Natural killer cell (primary cell): ENCODE measurements at regions of chr15 and their contacts with region 1.

Region 1: DNA sequence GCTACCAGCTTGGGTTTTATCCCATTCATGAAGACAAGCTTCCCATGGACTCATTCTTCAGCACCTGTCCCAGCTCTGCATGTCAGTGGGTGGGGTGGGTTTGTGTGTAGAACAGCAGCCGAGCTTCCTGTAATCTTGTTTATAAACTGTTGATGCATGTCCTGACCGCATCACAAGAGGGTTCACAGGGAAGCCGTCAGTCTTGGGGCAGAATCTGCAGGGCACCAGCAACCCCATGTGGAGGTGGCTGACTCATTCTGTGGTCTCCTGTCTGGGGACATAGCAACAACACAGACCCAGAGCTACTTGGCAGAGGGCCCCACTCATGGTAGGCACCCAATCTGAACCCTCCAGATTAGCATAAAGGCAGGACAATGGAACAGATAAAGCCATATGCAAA is 35.6 kb downstream of the DAPK2 start:
- DNase-seq: peak; percentile 76 to 95
- ATAC-seq: peak; percentile 86 to 96 (median 95)
- H3K4me3 ChIP-seq: no peak overlapping the region
- H3K4me3 Mint-ChIP-seq: peak overlapping the region; percentile 87
- H3K27ac ChIP-seq: peak overlapping the region; percentile 86
- H3K27ac Mint-ChIP-seq: peak overlapping the region; percentile 96 to 98
- H3K4me1 ChIP-seq: peaks cover 29% of the 10 kb centered on the region
- H3K4me1 Mint-ChIP-seq: peaks cover 39 to 40% of the 10 kb centered on the region in 2 donors
- H3K27me3 ChIP-seq: no peaks in the 10 kb centered on the region
- H3K27me3 Mint-ChIP-seq: no peaks in the 10 kb centered on the region
- CTCF ChIP-seq: no peak

Region 2: DNA sequence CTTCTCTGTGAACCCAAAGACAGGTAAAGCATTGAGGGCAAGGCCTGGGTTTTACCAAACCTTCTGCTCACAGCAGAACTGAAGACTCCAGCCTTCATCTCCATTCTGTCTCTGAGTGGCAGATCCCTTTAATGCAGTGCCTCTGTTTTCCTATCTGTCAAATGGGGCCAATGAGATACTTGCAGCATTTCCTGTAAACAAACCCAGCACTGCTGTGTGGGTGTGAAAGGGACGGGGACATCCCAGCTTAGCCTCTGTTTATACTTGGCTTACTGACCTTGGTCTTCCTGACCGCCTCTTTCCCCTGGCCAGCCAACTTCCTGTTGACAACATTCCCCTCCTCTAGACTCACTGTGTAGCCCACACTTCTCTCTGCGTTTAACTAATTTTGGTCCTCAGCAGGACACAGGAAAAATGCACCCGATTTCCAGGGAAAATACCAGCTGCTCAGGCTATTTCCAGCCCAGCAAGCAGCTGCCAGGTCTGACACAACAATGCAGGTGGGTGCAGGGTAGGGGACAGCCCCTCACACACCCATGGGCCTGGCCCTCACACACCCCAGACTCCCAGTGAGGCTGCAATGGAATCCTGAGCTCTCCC is 71.1 kb before region 1 on chr15:
- intact Hi-C with region 1: loop called (anchors 2 kb)
- DNase-seq: peak in 1 of 2 donors; percentile 55
- ATAC-seq: peak; percentile 80 to 86 (median 80)
- H3K4me3 ChIP-seq: no peak overlapping the region
- H3K4me3 Mint-ChIP-seq: peak overlapping the region; percentile 80
- H3K27ac ChIP-seq: peak overlapping the region; percentile 56
- H3K27ac Mint-ChIP-seq: peak overlapping the region; percentile 90 to 93
- H3K4me1 ChIP-seq: peaks cover 36% of the 10 kb centered on the region
- H3K4me1 Mint-ChIP-seq: peaks cover 32 to 58% of the 10 kb centered on the region in 2 donors
- H3K27me3 ChIP-seq: no peaks in the 10 kb centered on the region
- H3K27me3 Mint-ChIP-seq: no peaks in the 10 kb centered on the region
- CTCF ChIP-seq: no peak

Region 3: DNA sequence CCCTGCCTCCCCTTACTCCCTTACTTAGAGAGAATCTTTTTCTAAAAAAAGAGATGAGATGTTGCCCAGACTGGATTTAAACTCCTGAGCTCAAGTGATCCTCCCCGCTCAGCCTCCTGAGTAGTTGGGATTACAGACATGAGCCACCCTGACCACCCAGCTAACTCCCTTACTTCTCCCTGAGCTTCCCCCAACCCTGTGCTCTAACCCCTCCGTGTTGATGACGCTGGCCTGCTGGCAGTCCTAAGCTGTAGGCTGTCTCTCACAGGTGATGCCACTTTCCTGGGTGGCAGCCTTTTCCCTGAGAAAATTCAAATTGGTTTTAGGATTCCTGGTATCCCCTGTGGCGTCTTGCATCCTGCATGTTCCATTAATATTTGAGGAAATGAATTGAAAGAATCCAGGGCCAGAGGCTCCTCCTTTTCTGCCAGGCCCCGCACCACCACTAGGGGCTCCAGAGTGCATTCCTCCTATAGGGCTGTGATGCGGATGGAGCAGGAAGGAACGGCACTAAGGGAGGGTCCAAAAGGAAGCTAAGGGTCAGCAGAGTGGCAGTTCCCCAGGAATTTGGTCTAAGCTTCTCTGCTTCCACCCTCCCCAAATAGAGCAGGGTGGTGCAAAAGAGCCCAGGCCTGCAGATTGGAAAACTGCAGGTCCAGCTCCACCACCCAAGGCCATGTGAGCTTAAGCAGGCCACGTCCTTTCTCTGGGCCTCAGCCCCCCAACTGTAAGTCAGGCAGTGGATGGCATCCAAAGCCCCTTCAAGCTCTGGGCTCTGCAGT is 65.5 kb before region 1 on chr15:
- intact Hi-C with region 1: loop called (anchors 2 kb)
- DNase-seq: peak; percentile 60 to 78
- ATAC-seq: peak; percentile 87 to 98 (median 97)
- H3K4me3 ChIP-seq: no peak overlapping the region
- H3K4me3 Mint-ChIP-seq: peak overlapping the region; percentile 39
- H3K27ac ChIP-seq: no peak overlapping the region
- H3K27ac Mint-ChIP-seq: peak overlapping the region; percentile 76 to 84
- H3K4me1 ChIP-seq: peaks cover 15% of the 10 kb centered on the region
- H3K4me1 Mint-ChIP-seq: peaks cover 7 to 33% of the 10 kb centered on the region in 2 donors
- H3K27me3 ChIP-seq: no peaks in the 10 kb centered on the region
- H3K27me3 Mint-ChIP-seq: no peaks in the 10 kb centered on the region
- CTCF ChIP-seq: peak; percentile 91

Region 4: DNA sequence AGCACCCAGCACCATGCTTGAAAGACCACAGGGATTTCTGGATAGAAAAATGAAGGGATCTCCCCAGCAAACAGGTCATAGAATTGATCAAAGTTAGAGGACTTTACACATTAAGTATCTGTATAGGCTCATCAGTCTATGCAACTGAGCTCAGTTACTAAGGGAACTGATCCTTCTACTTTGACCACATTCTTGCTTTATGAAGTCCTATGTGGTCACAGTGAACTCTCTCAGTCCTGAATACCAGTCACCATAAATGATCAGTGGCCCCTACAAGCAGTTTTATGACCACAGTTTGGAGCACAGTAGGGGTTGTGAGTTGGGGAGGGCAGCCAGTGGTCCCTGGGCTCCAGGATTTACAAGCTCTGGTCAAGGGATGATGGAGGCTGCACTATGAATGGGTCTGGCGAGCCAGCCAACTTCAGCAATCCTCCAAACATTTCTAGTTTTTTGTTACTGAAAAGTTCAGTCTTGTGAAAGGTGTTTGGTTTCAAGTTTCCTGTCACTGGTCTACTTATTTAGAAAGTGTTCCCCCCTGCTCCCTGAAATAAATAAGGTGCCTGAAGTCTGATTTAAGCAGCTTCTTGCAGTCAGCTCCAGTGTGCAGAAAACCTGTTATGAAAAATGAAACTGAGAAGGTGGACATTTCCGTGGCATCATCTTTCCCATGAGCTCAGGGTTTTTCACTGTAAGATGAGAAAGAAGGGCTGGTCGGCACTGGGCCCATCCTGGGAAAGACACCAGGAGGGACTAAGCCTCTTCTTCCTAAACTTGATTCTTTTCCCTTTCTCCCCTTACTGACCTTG is 39.9 kb before region 1 on chr15:
- intact Hi-C with region 1: loop called (anchors 5 kb)
- DNase-seq: peak in 1 of 2 donors; percentile 40
- ATAC-seq: peak; percentile 43 to 58 (median 52)
- H3K4me3 ChIP-seq: no peak overlapping the region
- H3K4me3 Mint-ChIP-seq: peak overlapping the region; percentile 65
- H3K27ac ChIP-seq: peak overlapping the region; percentile 67
- H3K27ac Mint-ChIP-seq: peak overlapping the region; percentile 84 to 94
- H3K4me1 ChIP-seq: peaks cover 31% of the 10 kb centered on the region
- H3K4me1 Mint-ChIP-seq: peaks cover 44 to 45% of the 10 kb centered on the region in 2 donors
- H3K27me3 ChIP-seq: no peaks in the 10 kb centered on the region
- H3K27me3 Mint-ChIP-seq: no peaks in the 10 kb centered on the region
- CTCF ChIP-seq: no peak